ENCODE measurements at regions of chr17 and their contacts with region 1.

Region 1: GRCh38 chr17:80991645-80992076 is at the start of gene CHMP6:
- DNase-seq: peak; percentile 45 to 87 (median 66)
- ATAC-seq: peak; percentile 70
- H3K4me3 ChIP-seq: peak within 1 kb of the TSS; percentile 77
- H3K4me3 Mint-ChIP-seq: peak within 1 kb of the TSS; percentile 87
- H3K27ac ChIP-seq: peak within 1 kb of the TSS in 1 of 2 donors; percentile 41
- H3K27ac Mint-ChIP-seq: peak within 1 kb of the TSS; percentile 84
- H3K4me1 ChIP-seq: peaks cover 43% of the 10 kb centered on the region
- H3K4me1 Mint-ChIP-seq: peaks cover 21% of the 10 kb centered on the region
- H3K27me3 ChIP-seq: no peaks in the 10 kb centered on the region
- H3K27me3 Mint-ChIP-seq: peaks cover 4% of the 10 kb centered on the region
- CTCF ChIP-seq: no peak
- total RNA-seq, gene CHMP6: 11.5 to 13.3 TPM

Region 2: DNA sequence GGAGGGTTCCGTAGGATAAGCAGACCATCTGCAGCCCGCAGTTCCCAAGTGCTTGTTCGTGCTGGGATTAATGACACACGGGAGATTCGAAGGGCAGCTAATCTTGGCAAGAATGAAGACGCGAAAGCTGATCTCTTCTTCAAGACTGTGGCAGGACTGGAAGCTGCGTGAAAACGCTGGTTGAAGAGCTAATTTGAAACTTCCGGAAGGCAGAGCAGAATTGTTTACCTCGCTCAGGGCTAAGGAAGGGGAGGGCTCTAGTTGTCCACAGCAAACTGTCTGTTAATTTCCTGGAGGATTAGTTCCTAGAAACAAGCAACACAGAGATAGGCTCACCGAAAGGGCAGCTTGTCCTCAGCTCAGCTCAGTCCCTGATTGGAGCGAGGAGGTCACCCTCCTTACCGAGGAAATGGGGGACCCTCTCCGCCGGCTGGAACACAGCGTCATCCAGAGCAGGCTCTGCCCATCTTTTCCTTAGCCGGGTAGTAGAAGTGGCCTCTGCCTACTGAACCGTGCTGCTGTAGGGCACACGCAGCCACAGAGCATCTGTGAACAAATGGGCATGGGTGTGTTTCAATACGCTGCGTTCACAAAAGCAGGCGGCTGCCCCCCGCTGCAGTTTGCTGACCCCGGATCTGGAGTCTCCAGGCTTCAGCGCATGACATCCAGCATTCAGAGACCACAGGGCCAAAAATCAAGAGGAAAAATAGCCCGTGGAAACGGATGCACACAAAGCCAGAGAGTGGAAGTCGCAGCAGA is 26.6 kb after region 1 on chr17:
- CTCF ChIA-PET with region 1: interaction called, 3 read pairs
- POLR2A ChIA-PET with region 1: interaction called, 15 read pairs
- intact Hi-C with region 1: no loop called
- DNase-seq: peak in 12 of 14 experiments; percentile 22 to 73 (median 38)
- ATAC-seq: peak; percentile 88
- H3K4me3 ChIP-seq: peak overlapping the region; percentile 60
- H3K4me3 Mint-ChIP-seq: peak overlapping the region; percentile 84
- H3K27ac ChIP-seq: peak overlapping the region; percentile 56 to 81
- H3K27ac Mint-ChIP-seq: peak overlapping the region; percentile 93
- H3K4me1 ChIP-seq: peaks cover 34% of the 10 kb centered on the region
- H3K4me1 Mint-ChIP-seq: peaks cover 26% of the 10 kb centered on the region
- H3K27me3 ChIP-seq: no peaks in the 10 kb centered on the region
- H3K27me3 Mint-ChIP-seq: no peaks in the 10 kb centered on the region
- CTCF ChIP-seq: no peak

Region 3: GRCh38 chr17:81034779-81035388 is 43.2 kb after region 1 on chr17 and contains the start of gene BAIAP2:
- CTCF ChIA-PET with region 1: interaction called, 7 read pairs
- POLR2A ChIA-PET with region 1: interaction called, 7 read pairs
- intact Hi-C with region 1: loop called in 1 of 2 experiments (anchors 2 kb)
- DNase-seq: peak; percentile 96 to 100 (median 98)
- ATAC-seq: peak; percentile 86
- H3K4me3 ChIP-seq: peak within 1 kb of the TSS; percentile 60
- H3K4me3 Mint-ChIP-seq: peak within 1 kb of the TSS; percentile 98
- H3K27ac ChIP-seq: no peak within 1 kb of the TSS
- H3K27ac Mint-ChIP-seq: peak within 1 kb of the TSS; percentile 82
- H3K4me1 ChIP-seq: peaks cover 25% of the 10 kb centered on the region
- H3K4me1 Mint-ChIP-seq: peaks cover 28% of the 10 kb centered on the region
- H3K27me3 ChIP-seq: peaks cover 0 to 2% of the 10 kb centered on the region in 2 experiments
- H3K27me3 Mint-ChIP-seq: peaks cover 1% of the 10 kb centered on the region
- CTCF ChIP-seq: no peak
- total RNA-seq, gene BAIAP2: 4.2 to 4.9 TPM

Region 4: DNA sequence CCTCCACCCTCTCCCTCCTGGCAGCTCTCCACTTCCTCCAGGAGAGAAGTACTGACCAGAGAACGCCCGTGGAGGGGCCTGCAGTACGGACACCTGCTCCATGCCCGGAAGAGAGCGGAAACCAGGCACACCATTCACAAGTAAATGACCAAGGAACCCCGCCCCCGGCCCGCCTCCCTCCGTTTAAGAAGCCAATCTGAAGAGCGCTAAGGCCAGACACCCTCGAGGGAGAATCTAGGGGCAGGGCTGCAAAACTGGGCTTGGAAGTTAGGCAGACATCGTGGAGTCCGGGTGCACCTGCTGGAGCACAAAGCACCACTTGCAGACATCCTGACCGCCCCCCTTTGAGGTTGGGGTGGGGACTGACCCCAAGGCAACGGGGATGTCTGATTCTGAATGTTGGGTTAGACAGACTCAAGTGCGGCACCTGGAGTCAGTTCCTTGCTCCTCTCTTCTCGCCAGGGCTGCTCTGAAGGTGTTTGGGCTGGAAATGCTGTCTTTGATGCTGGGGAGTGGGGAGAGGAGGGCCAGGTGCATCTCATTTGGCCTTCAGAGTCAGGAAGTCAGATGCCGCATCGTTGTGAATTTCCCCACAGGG is 561.5 kb after region 1 on chr17:
- CTCF ChIA-PET with region 1: no interaction called
- POLR2A ChIA-PET with region 1: no interaction called
- intact Hi-C with region 1: loop called in 1 of 2 experiments (anchors 5 kb)
- DNase-seq: peak; percentile 48 to 92 (median 72)
- ATAC-seq: peak; percentile 74
- H3K4me3 ChIP-seq: peak overlapping the region; percentile 94
- H3K4me3 Mint-ChIP-seq: peak overlapping the region; percentile 94
- H3K27ac ChIP-seq: peak overlapping the region; percentile 79 to 83
- H3K27ac Mint-ChIP-seq: peak overlapping the region; percentile 93
- H3K4me1 ChIP-seq: peaks cover 41% of the 10 kb centered on the region
- H3K4me1 Mint-ChIP-seq: peaks cover 30% of the 10 kb centered on the region
- H3K27me3 ChIP-seq: no peaks in the 10 kb centered on the region
- H3K27me3 Mint-ChIP-seq: no peaks in the 10 kb centered on the region
- CTCF ChIP-seq: peak; percentile 0

Measured in CD4-positive, alpha-beta T cell (primary cell).